BJ (cell line): ENCODE measurements at regions of chr16 and their contacts with region 1.

Region 1: GRCh38 chr16:68328151-68328859 is 17.5 kb downstream of the PRMT7 start:
- DNase-seq: peak; percentile 19
- H3K4me3 ChIP-seq: no peak overlapping the region
- H3K27me3 ChIP-seq: no peaks in the 10 kb centered on the region
- CTCF ChIP-seq: peak; percentile 94

Region 2: GRCh38 chr16:68093816-68094613 is 234.3 kb before region 1 on chr16:
- CTCF ChIA-PET with region 1: interaction called, 12 read pairs
- POLR2A ChIA-PET with region 1: no interaction called
- DNase-seq: no peak
- H3K4me3 ChIP-seq: no peak overlapping the region
- H3K27me3 ChIP-seq: no peaks in the 10 kb centered on the region
- CTCF ChIP-seq: peak; percentile 62

Region 3: DNA sequence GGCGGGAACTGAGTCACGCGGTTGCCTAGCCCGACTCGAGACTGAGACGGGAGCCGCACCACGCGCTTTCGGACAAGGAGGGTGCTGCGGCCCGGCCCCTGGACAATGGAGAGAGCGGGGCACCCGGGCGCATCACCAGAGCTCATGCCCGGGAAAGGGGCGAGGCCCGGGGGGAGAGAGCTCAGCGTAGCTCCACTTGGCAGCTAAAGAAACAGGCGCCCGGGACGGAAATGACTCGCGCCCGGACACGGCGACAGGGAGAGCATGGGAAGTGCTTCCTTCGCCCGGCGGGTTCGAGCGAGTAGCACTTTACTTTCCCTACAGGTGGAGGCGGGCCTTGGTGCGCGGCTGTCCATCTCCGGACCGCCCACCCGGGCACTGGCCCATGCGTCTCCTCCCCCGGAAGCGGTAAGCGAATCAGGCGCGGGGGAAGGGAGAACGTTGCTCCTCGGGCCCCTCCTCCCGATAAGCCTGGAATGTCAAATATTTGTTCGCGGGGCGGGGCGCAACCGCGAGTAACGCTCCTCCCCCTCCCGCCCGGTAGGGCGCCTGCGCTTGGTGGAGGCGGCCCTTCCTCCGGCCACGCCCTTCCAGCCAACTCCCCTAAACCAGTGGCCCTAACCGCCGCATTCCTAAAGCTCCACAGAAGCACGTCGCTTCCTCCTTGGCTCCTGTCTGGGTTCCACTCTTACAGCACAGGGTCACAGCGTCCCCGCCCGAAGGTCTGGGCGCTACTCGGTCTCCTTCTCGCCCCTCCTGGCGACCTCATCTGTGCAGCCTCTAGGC is 90.9 kb before region 1 on chr16:
- CTCF ChIA-PET with region 1: interaction called, 20 read pairs
- POLR2A ChIA-PET with region 1: no interaction called
- DNase-seq: peak; percentile 89
- H3K4me3 ChIP-seq: peak overlapping the region; percentile 56
- H3K27me3 ChIP-seq: no peaks in the 10 kb centered on the region
- CTCF ChIP-seq: no peak

Region 4: GRCh38 chr16:68244903-68245853 is 83.1 kb before region 1 on chr16 and contains the start of gene PLA2G15:
- CTCF ChIA-PET with region 1: interaction called, 20 read pairs
- POLR2A ChIA-PET with region 1: no interaction called
- DNase-seq: no peak
- H3K4me3 ChIP-seq: peak within 1 kb of the TSS; percentile 92
- H3K27me3 ChIP-seq: no peaks in the 10 kb centered on the region
- CTCF ChIP-seq: 0 out of 2 replicates have a peak, but pooled peaks have one; percentile 8
- polyA plus RNA-seq, gene PLA2G15: 23.9 and 39.2 TPM in 2 replicates

Region 5: GRCh38 chr16:68338326-68339119 is 10.2 kb after region 1 on chr16:
- CTCF ChIA-PET with region 1: interaction called, 14 read pairs
- POLR2A ChIA-PET with region 1: no interaction called
- DNase-seq: no peak
- H3K4me3 ChIP-seq: no peak overlapping the region
- H3K27me3 ChIP-seq: no peaks in the 10 kb centered on the region
- CTCF ChIP-seq: no peak